Naive thymus-derived CD4-positive, alpha-beta T cell (primary cell): ENCODE measurements at regions of chr3 and their contacts with region 1.

Region 1: GRCh38 chr3:196979545-196979944 is 10.9 kb upstream of the PIGZ start:
- DNase-seq: no peak
- ATAC-seq: no peak
- H3K4me3 ChIP-seq: no peak overlapping the region
- H3K4me3 Mint-ChIP-seq: no peak overlapping the region
- H3K27ac ChIP-seq: no peak overlapping the region
- H3K27ac Mint-ChIP-seq: no peak overlapping the region
- H3K4me1 ChIP-seq: no peaks in the 10 kb centered on the region
- H3K4me1 Mint-ChIP-seq: peaks cover 0 to 7% (median 4%) of the 10 kb centered on the region in 7 donors
- H3K27me3 ChIP-seq: no peaks in the 10 kb centered on the region
- H3K27me3 Mint-ChIP-seq: peaks cover 0 to 21% (median 15%) of the 10 kb centered on the region in 5 donors

Region 2: DNA sequence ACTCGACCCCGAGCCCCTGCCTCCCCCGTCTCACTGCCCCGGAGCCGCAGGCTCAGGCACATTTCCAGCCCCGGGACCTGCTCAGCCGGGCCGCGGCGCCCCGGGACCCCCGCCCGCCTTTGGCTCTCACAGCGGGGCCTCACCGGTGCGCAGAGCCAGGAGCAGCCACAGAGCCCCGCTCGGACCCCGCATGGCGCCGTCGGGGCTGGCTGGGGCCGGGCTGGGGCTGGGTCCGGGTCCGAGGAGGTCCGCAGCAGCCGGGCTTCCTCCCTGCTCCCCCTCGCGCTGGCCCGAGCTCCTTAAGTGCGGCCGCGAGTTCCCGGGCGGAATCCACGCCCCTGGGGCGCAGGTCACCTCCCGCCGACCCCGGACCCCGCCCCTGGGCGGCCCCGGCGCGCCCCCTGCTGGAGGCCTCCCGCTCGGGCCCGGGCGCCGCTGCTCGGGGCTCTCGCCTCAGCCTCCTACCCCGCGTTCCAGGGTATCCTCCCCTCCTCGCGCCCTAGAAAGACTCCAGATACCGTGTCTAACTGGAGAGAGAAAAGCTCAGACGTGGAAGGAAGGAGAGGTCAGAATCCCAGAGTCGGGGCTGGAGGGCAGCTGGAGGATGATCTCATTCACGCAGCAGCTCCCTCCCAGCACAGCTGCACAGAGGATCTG is 50.1 kb after region 1 on chr3 and contains the start of gene MELTF:
- CTCF ChIA-PET with region 1: interaction called, 3 read pairs
- POLR2A ChIA-PET with region 1: no interaction called
- intact Hi-C with region 1: loop called in 1 of 2 experiments (anchors 2 kb)
- DNase-seq: peak; percentile 46 to 90 (median 75)
- ATAC-seq: peak; percentile 90
- H3K4me3 ChIP-seq: peak within 1 kb of the TSS; percentile 51
- H3K4me3 Mint-ChIP-seq: peak within 1 kb of the TSS; percentile 64 to 83 (median 78)
- H3K27ac ChIP-seq: peak within 1 kb of the TSS; percentile 24
- H3K27ac Mint-ChIP-seq: peak within 1 kb of the TSS in 3 of 9 donors; percentile 42 to 76 (median 45)
- H3K4me1 ChIP-seq: peaks cover 0 to 4% of the 10 kb centered on the region in 2 donors
- H3K4me1 Mint-ChIP-seq: peaks cover 0 to 19% (median under 1%) of the 10 kb centered on the region in 7 donors
- H3K27me3 ChIP-seq: peaks cover 0 to 3% of the 10 kb centered on the region in 2 donors
- H3K27me3 Mint-ChIP-seq: no peaks in the 10 kb centered on the region
- total RNA-seq, gene MELTF: 0.51 to 7.6 (median 2.7) TPM